ENCODE measurements at regions of chr4 and their contacts with region 1.

Region 1: GRCh38 chr4:20773144-20773997 is 73.1 kb downstream of the PACRGL start:
- DNase-seq: peak; percentile 64
- H3K4me3 ChIP-seq: no peak overlapping the region
- H3K27ac ChIP-seq: no peak overlapping the region
- H3K4me1 ChIP-seq: no peaks in the 10 kb centered on the region
- H3K27me3 ChIP-seq: no peaks in the 10 kb centered on the region
- CTCF ChIP-seq: peak; percentile 32 to 51 (median 47)
- POLR2A ChIP-seq: no peak

Region 2: DNA sequence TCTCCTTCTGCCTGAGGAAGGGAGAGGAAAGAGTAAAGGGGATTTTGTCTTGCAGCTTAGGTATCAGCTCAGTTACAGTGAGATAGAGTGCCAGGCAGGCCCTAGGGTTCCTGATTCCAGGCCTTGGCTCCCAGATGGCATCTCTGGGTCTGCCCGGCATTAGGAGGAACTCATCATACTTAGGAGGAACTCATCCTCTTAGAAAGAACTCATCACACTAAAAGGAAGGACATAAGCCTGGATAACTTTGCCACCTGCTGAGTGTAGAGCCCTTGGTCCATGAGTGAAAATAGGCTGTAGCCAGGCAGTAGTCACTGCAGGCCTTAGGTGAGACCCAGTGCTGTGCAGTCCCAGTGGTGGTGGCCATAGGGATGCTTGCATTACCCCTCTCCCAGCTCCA is 294.0 kb after region 1 on chr4:
- intact Hi-C with region 1: no loop called
- DNase-seq: no peak
- H3K4me3 ChIP-seq: no peak overlapping the region
- H3K27ac ChIP-seq: no peak overlapping the region
- H3K4me1 ChIP-seq: no peaks in the 10 kb centered on the region
- H3K27me3 ChIP-seq: no peaks in the 10 kb centered on the region
- CTCF ChIP-seq: no peak
- POLR2A ChIP-seq: no peak

Region 3: DNA sequence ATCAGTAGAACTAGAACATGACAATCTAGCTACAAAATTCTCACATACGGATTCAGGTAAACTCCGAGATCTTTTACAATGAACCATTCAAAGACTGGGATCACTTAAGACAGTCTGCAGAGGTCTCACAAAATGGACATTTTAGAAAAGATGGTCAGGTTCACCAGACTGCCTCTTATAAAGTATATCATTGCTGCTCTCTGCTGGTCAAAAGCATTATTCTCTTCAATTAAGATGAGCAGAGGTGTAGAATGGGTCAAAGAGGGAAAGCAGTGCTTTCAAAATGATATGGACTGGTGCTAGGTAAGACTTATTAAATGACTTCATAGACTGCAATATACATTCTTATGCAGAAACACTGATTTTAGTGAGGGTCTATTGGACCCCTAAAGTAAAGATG is 361.6 kb after region 1 on chr4:
- intact Hi-C with region 1: loop called (anchors 10 kb)
- DNase-seq: no peak
- H3K4me3 ChIP-seq: no peak overlapping the region
- H3K27ac ChIP-seq: no peak overlapping the region
- H3K4me1 ChIP-seq: no peaks in the 10 kb centered on the region
- H3K27me3 ChIP-seq: no peaks in the 10 kb centered on the region
- CTCF ChIP-seq: no peak
- POLR2A ChIP-seq: no peak